Left ventricle myocardium inferior (tissue), 1 donor: ENCODE measurements at regions of chr13 and their contacts with region 1.

Region 1: DNA sequence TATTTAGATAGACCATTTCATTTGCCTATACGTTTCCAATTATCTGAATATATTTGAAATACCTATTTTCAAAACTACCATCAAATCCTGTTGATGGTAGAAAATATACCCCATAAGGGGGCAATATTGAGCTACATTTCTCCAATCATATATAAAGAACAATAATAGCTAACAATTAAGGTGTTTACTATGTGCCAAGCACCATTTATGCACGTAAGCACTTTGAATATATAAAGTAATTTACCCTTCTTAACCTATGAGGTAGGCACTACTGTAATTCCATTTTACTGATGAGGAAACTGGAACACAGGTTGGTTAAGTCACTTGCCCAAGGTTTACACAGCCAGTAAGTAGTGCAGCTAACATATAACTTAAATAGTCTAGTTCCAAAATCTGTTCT is 79.2 kb downstream of the UBL3 start:
- DNase-seq: no peak
- H3K4me3 ChIP-seq: no peak overlapping the region
- H3K27ac ChIP-seq: no peak overlapping the region
- H3K4me1 ChIP-seq: no peaks in the 10 kb centered on the region
- H3K27me3 ChIP-seq: no peaks in the 10 kb centered on the region
- CTCF ChIP-seq: peak; percentile 59

Region 2: GRCh38 chr13:29607465-29607864 is 163.8 kb before region 1 on chr13:
- intact Hi-C with region 1: no loop called
- DNase-seq: no peak
- H3K4me3 ChIP-seq: no peak overlapping the region
- H3K27ac ChIP-seq: no peak overlapping the region
- H3K4me1 ChIP-seq: peaks cover 6% of the 10 kb centered on the region
- H3K27me3 ChIP-seq: peaks cover 15% of the 10 kb centered on the region
- CTCF ChIP-seq: no peak

Region 3: DNA sequence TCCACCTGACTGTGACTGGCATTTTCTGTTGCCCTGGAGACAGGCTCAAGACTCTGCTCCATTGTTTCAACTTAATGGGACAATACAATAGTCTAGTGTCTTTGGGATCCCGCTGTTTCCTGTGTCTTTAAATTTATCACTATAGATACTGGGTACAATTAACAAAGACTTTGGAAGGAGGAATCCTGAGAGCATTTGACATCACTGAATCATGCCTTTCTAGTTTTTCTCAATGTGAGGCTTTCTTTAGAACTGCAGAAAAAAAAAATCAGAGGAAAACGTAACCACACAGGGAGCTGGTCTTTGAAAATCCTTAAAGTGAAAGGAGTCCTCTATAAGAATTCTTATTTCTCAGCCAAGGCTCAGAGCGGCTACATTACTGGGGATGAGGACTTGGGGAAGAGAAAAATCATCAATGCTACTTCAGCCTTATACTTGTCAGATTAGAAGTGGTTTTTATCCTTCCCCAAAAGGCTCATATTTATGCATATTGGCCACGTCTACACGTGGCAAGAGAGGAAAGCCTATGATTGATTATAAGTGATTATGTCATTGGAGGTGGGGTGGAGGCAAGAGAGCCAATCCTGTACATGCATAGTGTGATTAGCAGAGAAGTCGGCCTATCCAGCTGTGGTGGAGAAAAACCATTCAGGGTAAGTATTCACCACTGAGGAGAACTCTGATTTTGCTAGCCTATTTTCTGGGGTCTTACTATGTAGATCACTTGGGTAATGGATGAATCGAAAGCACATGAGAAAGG is 113.6 kb after region 1 on chr13:
- intact Hi-C with region 1: no loop called
- DNase-seq: no peak
- H3K4me3 ChIP-seq: no peak overlapping the region
- H3K27ac ChIP-seq: no peak overlapping the region
- H3K4me1 ChIP-seq: peaks cover 14% of the 10 kb centered on the region
- H3K27me3 ChIP-seq: no peaks in the 10 kb centered on the region
- CTCF ChIP-seq: no peak

Region 4: DNA sequence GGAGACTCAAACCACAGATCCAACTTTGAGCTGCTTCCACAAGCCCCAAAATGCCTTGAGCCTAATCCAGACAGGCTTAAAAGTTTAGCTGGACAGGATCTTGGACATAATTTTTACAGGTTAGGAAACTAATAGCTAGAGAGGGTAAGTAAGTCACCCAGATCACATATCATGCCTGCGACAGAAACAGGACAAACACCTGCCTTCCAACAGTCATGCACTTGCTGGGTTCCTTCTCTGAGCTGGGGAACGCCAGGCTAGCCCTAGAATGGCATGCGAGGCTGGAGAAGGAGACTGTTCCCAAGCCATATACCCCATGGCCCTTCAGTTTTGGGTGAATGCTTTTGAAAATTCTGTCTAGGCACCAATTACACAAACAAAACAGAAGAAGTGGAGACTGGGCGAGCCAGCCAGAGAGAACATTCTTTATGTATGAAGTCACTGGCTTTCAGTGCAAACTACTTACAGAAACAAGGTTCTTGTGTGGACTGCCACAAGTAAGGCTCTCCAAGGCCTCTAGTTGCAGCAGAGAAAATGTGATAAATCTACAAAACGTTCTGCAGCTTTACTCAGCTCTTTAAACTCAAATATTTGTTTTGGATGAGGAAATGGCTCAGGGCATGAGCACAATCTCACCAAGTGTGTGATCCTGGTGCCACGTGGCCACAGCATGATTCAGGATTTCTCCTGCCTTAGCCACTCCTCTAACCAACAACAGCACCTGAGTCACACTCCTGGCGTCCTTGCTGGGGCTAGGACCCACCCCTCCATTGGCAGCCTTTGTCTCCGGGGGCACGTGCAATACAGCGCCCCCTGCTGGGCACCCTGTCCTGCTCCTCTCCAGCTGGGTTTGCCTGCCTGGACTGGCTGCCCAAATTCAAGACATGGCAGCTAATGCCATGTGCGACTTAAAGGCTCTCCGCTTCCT is 152.6 kb after region 1 on chr13:
- intact Hi-C with region 1: loop called (anchors 10 kb)
- DNase-seq: peak; percentile 42
- H3K4me3 ChIP-seq: no peak overlapping the region
- H3K27ac ChIP-seq: peak overlapping the region; percentile 72
- H3K4me1 ChIP-seq: peaks cover 30% of the 10 kb centered on the region
- H3K27me3 ChIP-seq: no peaks in the 10 kb centered on the region
- CTCF ChIP-seq: peak; percentile 73

Region 5: GRCh38 chr13:30114571-30115256 is 343.5 kb after region 1 on chr13:
- intact Hi-C with region 1: loop called (anchors 5 kb)
- DNase-seq: peak; percentile 89
- H3K4me3 ChIP-seq: peak overlapping the region; percentile 71
- H3K27ac ChIP-seq: peak overlapping the region; percentile 53
- H3K4me1 ChIP-seq: peaks cover 29% of the 10 kb centered on the region
- H3K27me3 ChIP-seq: peaks cover 18% of the 10 kb centered on the region
- CTCF ChIP-seq: peak; percentile 92

Region 6: DNA sequence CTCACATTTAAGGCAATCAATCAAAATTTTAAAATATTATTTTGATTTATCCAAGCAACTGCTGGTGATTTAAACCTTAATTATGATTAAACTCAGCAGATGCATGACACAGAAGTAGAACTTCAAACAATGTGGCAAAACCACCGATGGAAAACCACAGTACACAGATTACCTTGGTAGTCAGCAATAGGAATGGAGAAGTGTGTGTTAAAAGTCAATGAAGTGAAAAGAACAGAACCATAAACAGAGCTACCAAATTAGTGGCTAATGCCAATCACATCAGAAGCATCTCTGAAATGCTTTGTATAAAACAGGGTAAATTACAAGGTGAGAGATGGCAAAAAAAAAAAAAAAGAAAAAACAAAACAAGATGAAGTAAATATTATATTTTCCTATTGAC is 504.9 kb after region 1 on chr13:
- intact Hi-C with region 1: no loop called
- DNase-seq: no peak
- H3K4me3 ChIP-seq: no peak overlapping the region
- H3K27ac ChIP-seq: no peak overlapping the region
- H3K4me1 ChIP-seq: peaks cover 16% of the 10 kb centered on the region
- H3K27me3 ChIP-seq: no peaks in the 10 kb centered on the region
- CTCF ChIP-seq: no peak